ENCODE measurements at regions of chr19 and their contacts with region 1.

Region 1: DNA sequence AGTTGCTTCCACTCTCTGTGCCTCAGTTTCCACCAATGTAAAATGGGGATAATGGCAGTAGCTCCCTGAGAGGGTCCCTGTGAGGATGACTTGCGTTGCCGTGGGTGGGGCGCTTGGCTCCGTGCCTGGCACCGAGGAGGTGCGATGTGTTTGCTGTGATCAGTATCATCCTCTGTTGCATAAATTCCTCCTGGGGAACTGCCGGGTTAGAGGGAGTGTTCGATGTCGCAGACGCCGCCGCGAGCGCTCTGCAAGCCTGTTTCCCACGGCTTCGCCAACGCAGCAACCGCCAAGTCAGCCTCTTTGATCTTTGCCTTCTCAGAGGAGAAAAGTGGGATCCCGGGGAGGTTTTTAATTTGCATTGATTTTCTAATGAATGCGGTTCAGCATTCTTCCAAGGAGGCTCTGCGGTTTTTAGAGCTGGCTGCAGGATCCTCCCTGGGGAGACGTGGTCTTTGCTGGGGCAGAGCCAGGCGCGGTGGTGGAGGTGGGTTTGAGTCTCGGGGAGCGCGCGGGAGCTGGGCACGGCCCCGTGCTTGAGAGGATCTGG is 7.6 kb downstream of the GPR32 start:
- DNase-seq: no peak
- H3K4me3 ChIP-seq: no peak overlapping the region
- H3K27ac ChIP-seq: no peak overlapping the region
- H3K27me3 ChIP-seq: peaks cover 33% of the 10 kb centered on the region
- CTCF ChIP-seq: no peak

Region 2: GRCh38 chr19:50368649-50369570 is 408.9 kb before region 1 on chr19:
- CTCF ChIA-PET with region 1: interaction called, 14 read pairs
- POLR2A ChIA-PET with region 1: no interaction called
- DNase-seq: peak; percentile 65
- H3K4me3 ChIP-seq: peak overlapping the region; percentile 79
- H3K27ac ChIP-seq: peak overlapping the region; percentile 39
- H3K27me3 ChIP-seq: no peaks in the 10 kb centered on the region
- CTCF ChIP-seq: peak; percentile 81

Region 3: GRCh38 chr19:50537762-50538230 is 240.0 kb before region 1 on chr19:
- CTCF ChIA-PET with region 1: interaction called, 71 read pairs
- POLR2A ChIA-PET with region 1: no interaction called
- DNase-seq: peak; percentile 33
- H3K4me3 ChIP-seq: no peak overlapping the region
- H3K27ac ChIP-seq: no peak overlapping the region
- H3K27me3 ChIP-seq: no peaks in the 10 kb centered on the region
- CTCF ChIP-seq: peak; percentile 79

Region 4: GRCh38 chr19:50580970-50581634 is 196.7 kb before region 1 on chr19:
- CTCF ChIA-PET with region 1: no interaction called
- POLR2A ChIA-PET with region 1: no interaction called
- DNase-seq: no peak
- H3K4me3 ChIP-seq: no peak overlapping the region
- H3K27ac ChIP-seq: no peak overlapping the region
- H3K27me3 ChIP-seq: no peaks in the 10 kb centered on the region
- CTCF ChIP-seq: no peak

Region 5: DNA sequence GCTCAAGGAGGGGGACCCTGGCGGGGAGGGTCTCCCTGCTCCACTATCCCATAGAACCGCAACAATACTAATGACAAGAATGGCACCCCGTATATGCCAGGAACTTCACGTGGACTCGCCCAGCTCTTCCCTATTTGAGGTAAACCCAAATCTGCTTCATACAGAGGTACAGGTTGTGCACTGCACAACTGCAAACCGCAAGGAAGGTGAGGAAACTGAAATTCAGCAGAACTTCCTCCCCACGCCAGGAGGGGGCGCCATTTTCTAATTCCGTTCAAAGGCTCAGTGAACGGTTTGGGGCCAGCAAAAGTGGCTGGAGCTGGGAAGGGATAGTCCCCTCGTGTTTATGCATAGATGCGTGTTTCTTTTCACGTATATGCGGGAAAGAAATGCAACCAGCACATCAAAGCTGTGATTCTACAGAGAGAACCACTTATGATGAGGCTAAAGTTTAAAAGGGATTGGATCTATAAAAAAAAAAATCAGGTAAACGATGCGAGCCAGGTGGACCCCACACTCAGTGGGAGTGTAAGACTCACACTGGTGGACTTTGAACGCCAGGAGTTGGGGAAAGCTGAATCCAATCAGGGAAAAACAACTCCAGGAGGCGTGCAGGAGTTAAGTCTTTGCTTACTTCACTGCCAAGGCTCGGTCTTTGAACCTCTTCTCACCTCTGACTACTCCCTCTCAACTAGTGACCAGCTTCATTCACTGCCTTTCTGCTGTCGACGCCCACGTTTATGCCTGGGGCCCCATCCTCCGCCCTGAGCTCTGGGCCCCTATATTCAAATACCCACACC is 108.3 kb before region 1 on chr19:
- CTCF ChIA-PET with region 1: interaction called, 40 read pairs
- POLR2A ChIA-PET with region 1: interaction called, 3 read pairs
- DNase-seq: no peak
- H3K4me3 ChIP-seq: no peak overlapping the region
- H3K27ac ChIP-seq: no peak overlapping the region
- H3K27me3 ChIP-seq: peaks cover 36% of the 10 kb centered on the region
- CTCF ChIP-seq: peak; percentile 84

Region 6: DNA sequence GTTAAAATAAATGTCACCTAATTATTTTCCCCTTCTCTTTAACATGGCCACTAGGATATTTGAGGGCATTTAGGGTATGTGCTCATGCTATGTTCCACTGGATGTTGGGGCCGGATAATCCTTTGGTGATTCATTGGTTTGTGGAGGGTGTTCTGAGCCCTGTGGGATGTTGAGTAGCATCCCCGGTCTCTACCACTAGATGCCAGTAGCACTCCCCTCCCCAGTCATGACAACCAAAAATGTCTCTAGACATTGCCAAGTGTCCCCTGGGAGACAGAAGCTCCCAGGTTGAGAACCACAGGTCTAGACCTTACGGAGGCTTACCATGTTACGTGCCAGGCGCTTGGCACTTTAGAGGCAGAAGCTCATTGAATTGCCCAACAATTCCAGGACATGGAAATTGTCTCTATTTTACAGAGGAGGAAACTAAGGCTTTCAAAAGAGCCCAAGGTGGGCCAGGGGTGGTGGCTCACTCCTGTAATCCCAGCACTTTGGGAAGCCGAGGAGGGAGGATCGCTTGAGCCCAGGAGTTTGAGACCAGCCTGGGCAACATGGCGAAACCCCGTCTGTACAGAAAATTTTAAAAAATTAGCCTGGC is 72.3 kb before region 1 on chr19:
- CTCF ChIA-PET with region 1: interaction called, 23 read pairs
- POLR2A ChIA-PET with region 1: interaction called, 6 read pairs
- DNase-seq: peak; percentile 30
- H3K4me3 ChIP-seq: no peak overlapping the region
- H3K27ac ChIP-seq: no peak overlapping the region
- H3K27me3 ChIP-seq: no peaks in the 10 kb centered on the region
- CTCF ChIP-seq: peak; percentile 94

Measured in AG04450 (cell line).